ENCODE measurements at regions of chr1 and their contacts with region 1.

Region 1: GRCh38 chr1:186618401-186619170 is 61.6 kb downstream of the PTGS2 start:
- DNase-seq: peak; percentile 66
- H3K4me3 ChIP-seq: peak overlapping the region in 2 of 4 donors; percentile 12 to 40
- H3K27ac ChIP-seq: peak overlapping the region in 3 of 4 donors; percentile 1 to 43 (median 17)
- H3K4me1 ChIP-seq: peaks cover 0 to 14% (median 0%) of the 10 kb centered on the region in 4 donors
- H3K27me3 ChIP-seq: no peaks in the 10 kb centered on the region
- CTCF ChIP-seq: no peak
- EP300 ChIP-seq: no peak
- POLR2A ChIP-seq: no peak

Region 2: DNA sequence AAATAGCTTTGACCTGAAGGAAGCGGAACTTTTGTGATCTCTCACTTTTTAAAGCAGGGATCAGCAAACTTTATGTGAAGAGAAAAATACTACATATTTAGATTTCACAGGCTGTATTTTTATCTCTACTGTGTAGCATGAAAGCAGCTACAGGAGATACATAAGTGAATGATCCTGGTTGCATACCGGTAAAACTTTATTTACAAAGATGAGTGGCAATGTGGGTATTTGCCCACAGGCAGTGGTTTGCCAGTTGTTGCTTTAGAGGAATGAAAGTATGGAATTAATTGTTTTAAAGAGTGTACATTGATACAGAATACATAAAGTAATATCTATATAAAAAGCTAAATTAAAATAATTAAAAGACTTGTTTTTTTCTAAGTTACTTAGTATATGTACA is 225.1 kb before region 1 on chr1:
- in situ Hi-C with region 1: no loop called
- intact Hi-C with region 1: no loop called
- DNase-seq: no peak
- H3K4me3 ChIP-seq: no peak overlapping the region
- H3K27ac ChIP-seq: no peak overlapping the region
- H3K4me1 ChIP-seq: no peaks in the 10 kb centered on the region
- H3K27me3 ChIP-seq: no peaks in the 10 kb centered on the region
- CTCF ChIP-seq: no peak
- EP300 ChIP-seq: no peak
- POLR2A ChIP-seq: no peak

Region 3: DNA sequence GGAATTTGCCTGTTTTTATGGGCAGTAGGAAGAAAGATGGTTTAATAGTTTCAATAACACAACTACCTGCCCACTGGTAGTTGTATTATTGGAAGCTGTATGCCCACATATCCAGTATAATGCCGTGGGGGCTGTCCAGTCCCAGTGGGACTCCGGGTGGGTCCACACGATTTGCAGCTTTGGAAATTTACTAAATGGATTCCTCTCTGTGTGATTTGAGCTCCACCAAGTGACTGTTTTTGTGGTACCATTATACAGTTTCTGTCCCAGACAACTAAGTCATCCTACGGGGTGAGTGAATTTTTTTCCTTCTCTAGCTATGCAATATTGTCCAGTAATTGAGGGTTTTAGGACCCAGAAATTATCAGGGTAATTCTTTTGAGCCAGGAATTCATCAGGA is 297.0 kb after region 1 on chr1:
- in situ Hi-C with region 1: no loop called
- intact Hi-C with region 1: loop called (anchors 10 kb)
- DNase-seq: no peak
- H3K4me3 ChIP-seq: no peak overlapping the region
- H3K27ac ChIP-seq: no peak overlapping the region
- H3K4me1 ChIP-seq: peaks cover 0 to 5% (median 3%) of the 10 kb centered on the region in 4 donors
- H3K27me3 ChIP-seq: no peaks in the 10 kb centered on the region
- CTCF ChIP-seq: no peak
- EP300 ChIP-seq: no peak
- POLR2A ChIP-seq: no peak